Psoas muscle (tissue), 8 donors: ENCODE measurements at regions of chr19 and their contacts with region 1.

Region 1: GRCh38 chr19:32688311-32688710 is 3.3 kb upstream of the NUDT19 start:
- DNase-seq: peak in 1 of 2 donors; percentile 28
- ATAC-seq: no peak
- H3K4me3 ChIP-seq: no peak overlapping the region
- H3K27ac ChIP-seq: no peak overlapping the region
- H3K4me1 ChIP-seq: peaks cover 22% of the 10 kb centered on the region
- H3K27me3 ChIP-seq: no peaks in the 10 kb centered on the region
- CTCF ChIP-seq: no peak

Region 2: DNA sequence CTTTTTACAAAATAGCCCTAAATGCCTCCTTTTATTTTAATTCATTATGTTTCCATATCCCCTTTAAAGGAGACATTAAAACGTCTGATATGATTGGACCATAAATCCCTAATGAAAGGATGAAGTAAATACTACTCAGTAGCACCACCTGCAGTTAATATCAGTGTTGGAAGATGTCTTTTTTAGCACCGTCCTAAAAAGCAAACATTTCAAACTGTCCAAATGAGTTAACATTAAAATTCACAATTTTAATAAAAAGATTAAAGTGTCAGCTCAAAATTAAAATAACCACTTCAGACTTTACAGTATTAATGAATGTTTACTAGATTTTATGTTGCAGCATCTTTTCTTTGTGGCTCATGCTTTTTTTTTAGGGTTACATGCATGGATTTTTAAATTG is 330.6 kb before region 1 on chr19:
- intact Hi-C with region 1: loop called in 1 of 2 experiments (anchors 10 kb)
- DNase-seq: no peak
- ATAC-seq: no peak
- H3K4me3 ChIP-seq: no peak overlapping the region
- H3K27ac ChIP-seq: no peak overlapping the region
- H3K4me1 ChIP-seq: peaks cover under 1% of the 10 kb centered on the region
- H3K27me3 ChIP-seq: no peaks in the 10 kb centered on the region
- CTCF ChIP-seq: peak; percentile 12

Region 3: GRCh38 chr19:32767951-32768679 is 79.8 kb after region 1 on chr19:
- intact Hi-C with region 1: no loop called
- DNase-seq: no peak
- ATAC-seq: no peak
- H3K4me3 ChIP-seq: no peak overlapping the region
- H3K27ac ChIP-seq: no peak overlapping the region
- H3K4me1 ChIP-seq: no peaks in the 10 kb centered on the region
- H3K27me3 ChIP-seq: no peaks in the 10 kb centered on the region
- CTCF ChIP-seq: no peak